H1 (cell line): ENCODE measurements at regions of chr14 and their contacts with region 1.

Region 1: DNA sequence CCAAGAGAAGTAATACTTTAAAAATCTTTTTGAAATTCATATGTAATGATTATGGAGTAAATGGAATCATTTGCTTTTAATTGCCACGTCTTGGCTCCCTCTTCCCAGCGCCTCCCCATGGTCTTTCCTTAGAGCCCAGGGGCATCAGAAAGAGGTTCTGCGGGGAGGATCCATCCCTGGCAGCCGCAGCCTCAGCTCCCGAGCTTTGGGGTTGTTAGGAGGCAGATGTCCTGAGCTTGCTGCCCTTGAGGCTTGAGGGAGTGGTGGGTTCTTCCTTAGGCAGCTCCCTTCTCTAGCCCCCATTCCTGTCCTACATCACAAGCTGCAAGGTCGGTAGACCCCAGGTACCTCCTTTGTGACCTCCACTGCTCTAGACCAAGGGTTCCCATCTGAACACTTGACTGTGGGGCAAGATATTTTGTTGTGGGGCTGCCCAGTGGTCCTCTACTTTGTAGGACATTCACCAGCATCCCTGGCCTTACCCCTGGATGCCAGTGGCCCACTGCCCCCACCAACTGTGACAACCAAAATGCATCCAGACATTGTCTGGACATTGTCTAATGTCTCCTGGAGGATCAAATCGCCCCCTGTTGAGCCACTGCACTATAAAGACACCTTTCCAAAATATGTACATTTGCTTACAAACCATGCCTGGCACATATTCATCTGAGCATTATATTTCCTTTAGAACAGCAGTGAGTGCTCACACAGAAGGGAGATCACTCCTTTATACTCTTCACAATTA is 6.3 kb downstream of the PPP2R5C start:
- DNase-seq: no peak
- H3K4me3 ChIP-seq: no peak overlapping the region
- H3K27ac ChIP-seq: no peak overlapping the region
- H3K4me1 ChIP-seq: peaks cover 0 to 3% (median 0%) of the 10 kb centered on the region in 4 experiments; a peak in 1 of 7 replicates
- H3K27me3 ChIP-seq: peaks cover 0 to 3% (median 0%) of the 10 kb centered on the region in 4 experiments; a peak in 2 of 7 replicates
- CTCF ChIP-seq: no peak
- EP300 ChIP-seq: no peak
- POLR2A ChIP-seq: no peak
- RAD21 ChIP-seq: no peak

Region 2: GRCh38 chr14:101595887-101596721 is 171.7 kb before region 1 on chr14:
- CTCF ChIA-PET with region 1: no interaction called
- POLR2A ChIA-PET with region 1: no interaction called
- DNase-seq: no peak
- H3K4me3 ChIP-seq: no peak overlapping the region
- H3K27ac ChIP-seq: no peak overlapping the region
- H3K4me1 ChIP-seq: no peaks in the 10 kb centered on the region
- H3K27me3 ChIP-seq: no peaks in the 10 kb centered on the region
- CTCF ChIP-seq: no peak
- EP300 ChIP-seq: no peak
- POLR2A ChIP-seq: no peak
- RAD21 ChIP-seq: no peak

Region 3: GRCh38 chr14:101687756-101688546 is 79.8 kb before region 1 on chr14:
- CTCF ChIA-PET with region 1: no interaction called
- POLR2A ChIA-PET with region 1: no interaction called
- DNase-seq: no peak
- H3K4me3 ChIP-seq: no peak overlapping the region
- H3K27ac ChIP-seq: no peak overlapping the region
- H3K4me1 ChIP-seq: peaks cover 0 to 4% (median 0%) of the 10 kb centered on the region in 4 experiments; a peak in 3 of 7 replicates
- H3K27me3 ChIP-seq: peaks cover 14 to 50% (median 42%) of the 10 kb centered on the region in 4 experiments; a peak in 6 of 7 replicates
- CTCF ChIP-seq: no peak
- EP300 ChIP-seq: no peak
- POLR2A ChIP-seq: no peak
- RAD21 ChIP-seq: no peak

Region 4: GRCh38 chr14:101726295-101726953 is 41.4 kb before region 1 on chr14:
- CTCF ChIA-PET with region 1: interaction called, 12 read pairs
- POLR2A ChIA-PET with region 1: interaction called, 6 read pairs
- DNase-seq: no peak
- H3K4me3 ChIP-seq: no peak overlapping the region
- H3K27ac ChIP-seq: no peak overlapping the region
- H3K4me1 ChIP-seq: peaks cover 2 to 7% (median 5%) of the 10 kb centered on the region in 4 experiments; a peak in 6 of 7 replicates
- H3K27me3 ChIP-seq: no peaks in the 10 kb centered on the region
- CTCF ChIP-seq: no peak
- EP300 ChIP-seq: no peak
- POLR2A ChIP-seq: no peak
- RAD21 ChIP-seq: no peak

Region 5: DNA sequence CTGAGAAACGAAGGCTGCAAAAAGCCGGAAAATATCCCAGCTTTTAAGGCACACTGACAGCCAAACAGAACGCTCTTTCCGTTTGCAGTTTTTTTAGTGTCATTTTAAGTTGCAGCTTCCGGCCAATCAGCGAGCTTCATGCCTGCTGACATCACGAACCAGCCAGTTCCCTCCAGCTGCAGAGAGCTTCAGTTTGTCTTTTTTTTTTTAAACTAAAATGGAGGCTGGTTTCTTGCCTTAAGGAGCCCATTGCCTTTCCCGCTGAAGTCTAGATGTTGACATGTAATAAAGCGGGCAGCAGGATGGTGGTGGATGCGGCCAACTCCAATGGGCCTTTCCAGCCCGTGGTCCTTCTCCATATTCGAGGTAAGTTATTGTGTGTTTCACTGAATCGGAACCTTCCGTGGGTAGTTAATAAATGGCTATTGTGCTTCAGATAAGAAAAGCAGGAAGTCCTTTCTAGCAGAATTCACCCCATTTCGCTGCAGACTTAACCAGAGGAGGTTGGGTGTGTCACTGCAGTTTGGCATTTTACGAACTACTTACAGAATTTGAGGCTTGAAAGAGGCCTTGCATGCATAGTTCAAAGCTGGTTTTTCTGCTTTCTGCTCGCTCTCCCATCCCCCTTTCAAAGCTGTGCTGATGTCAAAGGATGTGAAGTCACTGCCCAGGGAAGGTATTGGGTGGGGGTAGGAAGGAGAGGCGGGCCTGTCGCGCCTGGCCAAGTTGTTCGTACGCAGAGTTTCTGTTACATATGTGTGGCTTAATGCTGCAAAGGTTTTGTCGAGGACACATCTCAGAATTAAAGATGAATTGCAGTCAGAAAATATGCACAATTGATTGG is 42.1 kb after region 1 on chr14:
- CTCF ChIA-PET with region 1: interaction called, 38 read pairs
- POLR2A ChIA-PET with region 1: interaction called, 6 read pairs
- DNase-seq: peak; percentile 63 to 75
- H3K4me3 ChIP-seq: peak overlapping the region; percentile 82 to 99 (median 91)
- H3K27ac ChIP-seq: peak overlapping the region; percentile 98
- H3K4me1 ChIP-seq: peaks cover 0 to 10% (median 6%) of the 10 kb centered on the region in 4 experiments
- H3K27me3 ChIP-seq: no peaks in the 10 kb centered on the region
- CTCF ChIP-seq: no peak
- EP300 ChIP-seq: peak in 1 of 2 experiments; percentile 64; a peak in 1 of 3 replicates
- POLR2A ChIP-seq: peak; percentile 74 to 87
- RAD21 ChIP-seq: no peak

Region 6: DNA sequence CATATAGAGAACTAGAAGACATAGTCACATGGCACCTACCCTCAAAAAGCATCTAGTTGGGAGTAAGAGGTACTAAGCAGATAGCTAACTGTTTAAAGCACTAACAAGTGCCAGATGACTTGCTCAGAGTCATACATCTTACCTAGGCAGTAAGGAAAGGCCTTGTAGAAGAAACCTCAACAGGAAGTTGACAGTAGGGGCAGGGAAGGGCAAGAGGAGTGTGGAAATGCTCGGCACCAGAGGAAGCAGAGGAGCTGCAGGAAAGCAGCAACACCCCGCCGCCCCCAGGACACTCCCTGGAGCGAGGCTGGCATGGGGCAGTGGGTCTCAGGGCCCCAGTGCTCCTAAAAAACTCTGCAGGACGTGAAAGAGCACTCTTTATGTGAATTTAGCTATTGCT is 86.6 kb after region 1 on chr14:
- CTCF ChIA-PET with region 1: interaction called, 15 read pairs
- POLR2A ChIA-PET with region 1: no interaction called
- DNase-seq: no peak
- H3K4me3 ChIP-seq: no peak overlapping the region
- H3K27ac ChIP-seq: no peak overlapping the region
- H3K4me1 ChIP-seq: no peaks in the 10 kb centered on the region
- H3K27me3 ChIP-seq: no peaks in the 10 kb centered on the region
- CTCF ChIP-seq: no peak
- EP300 ChIP-seq: no peak
- POLR2A ChIP-seq: no peak
- RAD21 ChIP-seq: no peak

Region 7: DNA sequence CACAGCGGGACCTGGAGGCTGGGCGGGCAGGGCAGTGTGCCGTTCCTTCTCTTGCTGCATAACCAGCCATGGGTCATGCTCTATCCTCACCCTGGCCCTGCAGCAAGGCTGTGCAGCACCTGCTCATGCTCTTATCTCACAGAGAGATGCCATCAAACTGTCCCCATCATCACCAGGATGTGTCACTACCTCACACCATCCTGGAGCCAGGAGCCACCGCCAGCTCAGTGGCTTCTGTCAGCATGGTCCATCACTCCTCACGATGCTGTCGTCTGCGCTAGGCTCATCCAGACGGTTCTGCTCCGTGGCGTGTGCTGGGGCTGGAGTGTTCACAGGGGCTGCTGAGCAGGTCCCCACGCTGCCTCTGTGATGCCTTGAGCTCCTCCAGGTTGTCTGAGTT is 119.4 kb after region 1 on chr14:
- CTCF ChIA-PET with region 1: interaction called, 11 read pairs
- POLR2A ChIA-PET with region 1: no interaction called
- DNase-seq: no peak
- H3K4me3 ChIP-seq: no peak overlapping the region
- H3K27ac ChIP-seq: no peak overlapping the region
- H3K4me1 ChIP-seq: no peaks in the 10 kb centered on the region
- H3K27me3 ChIP-seq: no peaks in the 10 kb centered on the region
- CTCF ChIP-seq: no peak
- EP300 ChIP-seq: no peak
- POLR2A ChIP-seq: no peak
- RAD21 ChIP-seq: no peak

Region 8: GRCh38 chr14:101929726-101930420 is 162.1 kb after region 1 on chr14:
- CTCF ChIA-PET with region 1: interaction called, 10 read pairs
- POLR2A ChIA-PET with region 1: no interaction called
- DNase-seq: no peak
- H3K4me3 ChIP-seq: no peak overlapping the region
- H3K27ac ChIP-seq: no peak overlapping the region
- H3K4me1 ChIP-seq: no peaks in the 10 kb centered on the region
- H3K27me3 ChIP-seq: peaks cover 0 to 5% (median 0%) of the 10 kb centered on the region in 4 experiments; a peak in 2 of 7 replicates
- CTCF ChIP-seq: no peak
- EP300 ChIP-seq: no peak
- POLR2A ChIP-seq: no peak
- RAD21 ChIP-seq: no peak

Region 9: GRCh38 chr14:101961011-101961721 is 193.4 kb after region 1 on chr14:
- CTCF ChIA-PET with region 1: interaction called, 33 read pairs
- POLR2A ChIA-PET with region 1: interaction called, 5 read pairs
- DNase-seq: peak; percentile 70 to 84
- H3K4me3 ChIP-seq: no peak overlapping the region
- H3K27ac ChIP-seq: no peak overlapping the region
- H3K4me1 ChIP-seq: peaks cover 0 to 3% (median under 1%) of the 10 kb centered on the region in 4 experiments; a peak in 2 of 7 replicates
- H3K27me3 ChIP-seq: peaks cover 4 to 26% (median 14%) of the 10 kb centered on the region in 4 experiments
- CTCF ChIP-seq: peak; percentile 92 to 96 (median 95)
- EP300 ChIP-seq: no peak
- POLR2A ChIP-seq: no peak
- RAD21 ChIP-seq: peak; percentile 81 to 91

Region 10: GRCh38 chr14:102461490-102462338 is 693.9 kb after region 1 on chr14:
- CTCF ChIA-PET with region 1: no interaction called
- POLR2A ChIA-PET with region 1: no interaction called
- DNase-seq: no peak
- H3K4me3 ChIP-seq: no peak overlapping the region
- H3K27ac ChIP-seq: no peak overlapping the region
- H3K4me1 ChIP-seq: no peaks in the 10 kb centered on the region
- H3K27me3 ChIP-seq: no peaks in the 10 kb centered on the region
- CTCF ChIP-seq: no peak
- EP300 ChIP-seq: no peak
- POLR2A ChIP-seq: no peak
- RAD21 ChIP-seq: no peak